ENCODE measurements at regions of chr3 and their contacts with region 1.

Region 1: GRCh38 chr3:42572278-42572677 is 9.5 kb downstream of the SEC22C start:
- DNase-seq: peak; percentile 62
- ATAC-seq: peak; percentile 100
- H3K4me3 ChIP-seq: no peak overlapping the region
- H3K27ac ChIP-seq: no peak overlapping the region
- H3K4me1 ChIP-seq: no peaks in the 10 kb centered on the region
- H3K27me3 ChIP-seq: no peaks in the 10 kb centered on the region
- CTCF ChIP-seq: peak; percentile 83
- EP300 ChIP-seq: no peak
- POLR2A ChIP-seq: no peak
- RAD21 ChIP-seq: peak; percentile 49; the same call in 1 of the 2 replicates

Region 2: DNA sequence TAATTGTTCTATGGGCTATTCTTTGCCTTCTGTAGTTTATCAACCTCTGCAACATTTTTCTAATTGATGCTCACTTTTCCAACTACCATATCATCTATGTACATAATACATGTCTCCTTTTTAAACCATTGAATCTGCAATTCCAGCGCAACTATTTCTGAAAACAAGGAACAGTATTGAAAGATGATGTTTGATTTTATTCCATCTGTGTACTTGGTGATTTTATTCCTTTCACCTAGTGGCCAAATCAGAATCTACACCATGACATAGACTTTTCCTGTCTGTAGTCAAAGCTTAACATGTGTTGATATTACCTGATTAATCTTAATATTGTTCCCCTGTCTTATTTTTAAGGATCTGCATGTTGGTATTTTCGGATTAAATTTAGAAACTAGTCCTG is 41.2 kb after region 1 on chr3:
- CTCF ChIA-PET with region 1: no interaction called
- POLR2A ChIA-PET with region 1: no interaction called
- in situ Hi-C with region 1: no loop called
- intact Hi-C with region 1: loop called (anchors 1 kb)
- DNase-seq: no peak
- ATAC-seq: peak; percentile 72
- H3K4me3 ChIP-seq: no peak overlapping the region
- H3K27ac ChIP-seq: peak overlapping the region; percentile 34
- H3K4me1 ChIP-seq: peaks cover 12% of the 10 kb centered on the region
- H3K27me3 ChIP-seq: no peaks in the 10 kb centered on the region
- CTCF ChIP-seq: no peak
- EP300 ChIP-seq: no peak
- POLR2A ChIP-seq: no peak
- RAD21 ChIP-seq: no peak

Measured in HepG2 (cell line).